ENCODE measurements at regions of chr12 and their contacts with region 1.

Region 1: GRCh38 chr12:32302218-32303173 is 96.9 kb upstream of the FGD4 start:
- DNase-seq: no peak
- H3K4me3 ChIP-seq: no peak overlapping the region
- H3K27ac ChIP-seq: no peak overlapping the region
- H3K4me1 ChIP-seq: no peaks in the 10 kb centered on the region
- H3K27me3 ChIP-seq: no peaks in the 10 kb centered on the region
- CTCF ChIP-seq: peak in 4 of 6 experiments; percentile 16 to 49 (median 35)
- POLR2A ChIP-seq: no peak

Region 2: DNA sequence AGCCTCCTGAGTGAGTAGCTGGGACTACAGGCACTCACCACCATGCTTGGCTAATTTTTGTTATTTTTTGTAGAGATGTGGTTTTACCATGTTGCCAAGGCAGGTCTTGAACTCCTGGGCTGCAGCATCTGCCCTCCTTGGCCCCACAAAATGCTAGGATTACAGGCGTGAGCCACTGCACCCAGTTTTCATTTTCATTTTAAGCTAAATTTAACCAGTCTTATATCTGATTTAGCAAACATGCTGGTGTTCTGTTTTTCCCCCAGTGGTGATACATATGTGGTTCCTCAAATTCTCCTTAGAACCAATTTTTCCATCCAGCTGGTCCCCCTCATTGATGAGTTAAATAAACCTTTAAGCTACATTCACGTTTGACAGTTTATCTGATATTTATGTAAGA is 239.6 kb before region 1 on chr12:
- intact Hi-C with region 1: loop called in 1 of 2 experiments (anchors 5 kb)
- DNase-seq: no peak
- H3K4me3 ChIP-seq: no peak overlapping the region
- H3K27ac ChIP-seq: no peak overlapping the region
- H3K4me1 ChIP-seq: no peaks in the 10 kb centered on the region
- H3K27me3 ChIP-seq: no peaks in the 10 kb centered on the region
- CTCF ChIP-seq: no peak
- POLR2A ChIP-seq: no peak

Measured in adrenal gland (tissue), 19 donors.